Naive thymus-derived CD4-positive, alpha-beta T cell (primary cell): ENCODE measurements at regions of chr2 and their contacts with region 1.

Region 1: GRCh38 chr2:207166039-207166348 is 246 bp upstream of the KLF7 start:
- DNase-seq: peak; percentile 88 to 99 (median 98)
- ATAC-seq: peak; percentile 93
- H3K4me3 ChIP-seq: peak overlapping the region; percentile 89
- H3K4me3 Mint-ChIP-seq: peak overlapping the region; percentile 94 to 100 (median 98)
- H3K27ac ChIP-seq: peak overlapping the region; percentile 100
- H3K27ac Mint-ChIP-seq: peak overlapping the region; percentile 93 to 99 (median 97)
- H3K4me1 ChIP-seq: peaks cover 0 to 17% of the 10 kb centered on the region in 2 donors
- H3K4me1 Mint-ChIP-seq: peaks cover 32 to 48% (median 36%) of the 10 kb centered on the region in 7 donors
- H3K27me3 ChIP-seq: no peaks in the 10 kb centered on the region
- H3K27me3 Mint-ChIP-seq: peaks cover 0 to 2% (median 0%) of the 10 kb centered on the region in 5 donors

Region 2: DNA sequence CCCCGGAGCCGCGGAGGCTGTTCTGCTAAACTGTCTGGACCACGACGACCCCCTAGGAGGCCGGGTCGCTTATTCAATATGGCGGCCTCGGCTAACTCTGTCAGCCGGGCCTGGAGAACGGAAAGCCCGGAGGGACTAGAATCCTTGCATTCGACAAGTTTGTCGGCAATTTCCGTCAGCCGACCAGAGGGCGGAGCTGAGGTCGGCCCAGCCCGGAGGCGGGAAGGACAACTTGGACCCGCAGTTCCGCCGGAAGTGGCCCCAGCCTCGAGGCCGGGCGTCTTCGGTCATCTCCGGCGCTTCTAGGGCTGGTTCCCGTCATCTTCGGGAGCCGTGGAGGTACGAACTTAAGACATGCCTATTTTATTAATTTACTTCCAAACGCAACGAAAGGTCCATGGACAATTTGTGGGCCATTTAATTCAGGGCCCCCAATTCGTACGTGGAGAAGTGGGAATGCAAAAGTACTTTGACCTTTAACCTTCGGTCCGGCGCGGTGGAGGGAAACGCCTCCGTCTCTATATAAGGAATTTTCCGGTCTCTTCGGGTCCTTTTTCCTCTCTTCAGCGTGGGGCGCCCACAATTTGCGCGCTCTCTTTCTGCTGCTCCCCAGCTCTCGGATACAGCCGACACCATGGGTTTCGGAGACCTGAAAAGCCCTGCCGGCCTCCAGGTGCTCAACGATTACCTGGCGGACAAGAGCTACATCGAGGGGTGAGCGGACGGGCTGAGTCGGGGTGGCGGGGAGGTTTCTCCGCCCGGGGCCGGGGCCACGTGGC is 1006.5 kb before region 1 on chr2 and contains the starts of genes EEF1B2 and NDUFS1:
- CTCF ChIA-PET with region 1: no interaction called
- POLR2A ChIA-PET with region 1: interaction called, 3 read pairs
- intact Hi-C with region 1: loop called in 1 of 2 experiments (anchors 2 kb)
- DNase-seq: peak; percentile 88 to 97 (median 96)
- ATAC-seq: peak; percentile 94
- H3K4me3 ChIP-seq: peak within 1 kb of the TSS; percentile 95
- H3K4me3 Mint-ChIP-seq: peak within 1 kb of the TSS; percentile 95 to 100 (median 98)
- H3K27ac ChIP-seq: peak within 1 kb of the TSS; percentile 96
- H3K27ac Mint-ChIP-seq: peak within 1 kb of the TSS; percentile 97 to 99 (median 99)
- H3K4me1 ChIP-seq: peaks cover 19 to 29% of the 10 kb centered on the region in 2 donors
- H3K4me1 Mint-ChIP-seq: peaks cover 36 to 78% (median 62%) of the 10 kb centered on the region in 7 donors
- H3K27me3 ChIP-seq: no peaks in the 10 kb centered on the region
- H3K27me3 Mint-ChIP-seq: no peaks in the 10 kb centered on the region
- total RNA-seq, gene EEF1B2: 542 to 1,236 (median 1,148) TPM
- total RNA-seq, gene NDUFS1: 37.3 to 61.9 (median 56.3) TPM

Region 3: GRCh38 chr2:207046724-207047123 is 119.3 kb before region 1 on chr2:
- CTCF ChIA-PET with region 1: interaction called, 5 read pairs
- POLR2A ChIA-PET with region 1: interaction called, 47 read pairs
- intact Hi-C with region 1: loop called (anchors 1 kb)
- DNase-seq: peak in 8 of 9 donors; percentile 24 to 69 (median 52)
- ATAC-seq: peak; percentile 79
- H3K4me3 ChIP-seq: no peak overlapping the region
- H3K4me3 Mint-ChIP-seq: peak overlapping the region in 8 of 10 donors; percentile 0 to 66 (median 12)
- H3K27ac ChIP-seq: no peak overlapping the region
- H3K27ac Mint-ChIP-seq: peak overlapping the region; percentile 2 to 78 (median 56)
- H3K4me1 ChIP-seq: peaks cover 0 to 4% of the 10 kb centered on the region in 2 donors
- H3K4me1 Mint-ChIP-seq: peaks cover 11 to 14% (median 13%) of the 10 kb centered on the region in 7 donors
- H3K27me3 ChIP-seq: no peaks in the 10 kb centered on the region
- H3K27me3 Mint-ChIP-seq: peaks cover 0 to 16% (median 0%) of the 10 kb centered on the region in 5 donors

Region 4: DNA sequence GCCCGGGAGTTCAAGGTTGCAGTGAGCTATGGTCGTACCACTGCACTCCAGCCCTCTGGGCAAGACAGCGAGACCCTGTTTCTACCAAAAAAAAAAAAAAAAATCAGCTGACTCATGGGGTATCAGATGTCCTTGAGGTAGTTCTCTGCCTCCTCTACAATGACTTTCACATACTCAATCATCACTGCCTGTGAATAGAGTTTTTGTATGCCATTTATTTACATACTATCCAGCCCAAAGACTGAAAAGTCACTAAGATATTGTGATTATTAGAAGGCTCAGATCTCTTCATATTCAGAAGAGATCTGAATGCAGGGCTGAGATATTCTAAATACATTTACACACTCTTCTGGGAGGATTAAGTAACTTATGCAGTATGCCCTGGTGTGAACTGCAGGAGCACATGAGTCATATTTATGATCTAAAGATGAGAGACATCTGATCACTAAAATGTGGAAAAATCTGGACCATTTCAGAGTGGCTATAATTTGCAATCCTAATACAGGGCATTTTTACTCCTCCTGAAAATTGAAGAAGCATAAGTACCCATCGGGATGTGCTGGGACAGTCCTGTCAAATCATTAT is 39.2 kb before region 1 on chr2:
- CTCF ChIA-PET with region 1: interaction called, 4 read pairs
- POLR2A ChIA-PET with region 1: interaction called, 23 read pairs
- intact Hi-C with region 1: loop called (anchors 5 kb)
- DNase-seq: no peak
- ATAC-seq: no peak
- H3K4me3 ChIP-seq: no peak overlapping the region
- H3K4me3 Mint-ChIP-seq: no peak overlapping the region
- H3K27ac ChIP-seq: no peak overlapping the region
- H3K27ac Mint-ChIP-seq: no peak overlapping the region
- H3K4me1 ChIP-seq: peaks cover 0 to 6% of the 10 kb centered on the region in 2 donors
- H3K4me1 Mint-ChIP-seq: peaks cover 34 to 94% (median 72%) of the 10 kb centered on the region in 7 donors
- H3K27me3 ChIP-seq: no peaks in the 10 kb centered on the region
- H3K27me3 Mint-ChIP-seq: no peaks in the 10 kb centered on the region

Region 5: GRCh38 chr2:207238831-207239701 is 73.1 kb after region 1 on chr2:
- CTCF ChIA-PET with region 1: interaction called, 3 read pairs
- POLR2A ChIA-PET with region 1: interaction called, 26 read pairs
- intact Hi-C with region 1: loop called in 1 of 2 experiments (anchors 2 kb)
- DNase-seq: peak in 1 of 9 donors; percentile 54
- ATAC-seq: peak; percentile 69
- H3K4me3 ChIP-seq: no peak overlapping the region
- H3K4me3 Mint-ChIP-seq: peak overlapping the region in 6 of 10 donors; percentile 13 to 63 (median 44)
- H3K27ac ChIP-seq: no peak overlapping the region
- H3K27ac Mint-ChIP-seq: peak overlapping the region in 4 of 9 donors; percentile 13 to 77 (median 42)
- H3K4me1 ChIP-seq: peaks cover 0 to 27% of the 10 kb centered on the region in 2 donors
- H3K4me1 Mint-ChIP-seq: peaks cover 0 to 46% (median 17%) of the 10 kb centered on the region in 7 donors
- H3K27me3 ChIP-seq: no peaks in the 10 kb centered on the region
- H3K27me3 Mint-ChIP-seq: no peaks in the 10 kb centered on the region

Region 6: DNA sequence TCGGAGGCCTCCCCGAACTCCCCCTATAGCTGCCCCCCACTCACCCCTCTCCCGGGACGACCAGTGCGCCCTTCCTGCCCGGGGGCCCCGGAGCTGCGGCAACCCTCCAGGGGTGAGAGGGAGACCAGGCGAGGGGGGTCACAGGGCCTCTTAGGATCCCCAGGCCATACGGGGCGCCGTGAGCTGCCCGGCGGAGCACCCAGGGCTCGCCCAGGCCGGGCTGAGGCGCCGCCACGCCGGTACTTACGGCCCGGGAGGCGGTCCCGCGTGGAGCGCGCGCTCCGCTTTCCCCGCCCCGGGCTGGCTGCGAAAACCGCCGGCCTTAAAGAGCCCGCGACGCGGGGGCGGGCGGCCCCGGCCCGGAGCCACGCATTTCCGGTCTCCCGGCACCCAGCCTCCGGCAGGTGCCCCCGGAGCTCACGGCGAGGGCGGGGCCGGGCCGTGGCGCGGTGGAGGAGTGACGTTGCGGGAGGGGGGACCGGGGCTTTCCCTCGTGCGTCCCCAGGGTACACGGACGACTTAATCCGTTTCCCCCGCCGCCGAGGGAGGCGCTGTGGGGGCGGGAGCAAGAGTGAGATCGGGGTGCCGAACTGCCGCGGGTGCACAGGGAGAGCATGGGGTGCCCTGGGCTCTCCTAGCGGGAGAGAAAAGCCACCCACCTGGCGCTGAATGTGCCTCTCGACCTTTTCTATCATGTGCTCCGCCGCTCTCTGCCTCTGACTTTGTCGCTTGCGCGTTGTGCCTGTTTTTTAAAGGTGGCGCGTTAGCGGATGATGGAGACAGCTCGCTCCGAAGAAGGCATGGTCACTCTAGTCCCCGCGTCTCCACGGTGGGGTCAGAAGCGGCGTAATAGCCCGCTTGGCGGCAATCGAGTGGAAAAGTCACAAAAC is 459.3 kb after region 1 on chr2 and contains the start of gene METTL21A:
- CTCF ChIA-PET with region 1: no interaction called
- POLR2A ChIA-PET with region 1: interaction called, 5 read pairs
- intact Hi-C with region 1: loop called (anchors 1 kb)
- DNase-seq: peak; percentile 91 to 97 (median 95)
- ATAC-seq: peak; percentile 91
- H3K4me3 ChIP-seq: peak within 1 kb of the TSS; percentile 92
- H3K4me3 Mint-ChIP-seq: peak within 1 kb of the TSS; percentile 93 to 96 (median 94)
- H3K27ac ChIP-seq: peak within 1 kb of the TSS; percentile 99
- H3K27ac Mint-ChIP-seq: peak within 1 kb of the TSS; percentile 86 to 96 (median 95)
- H3K4me1 ChIP-seq: peaks cover 4 to 10% of the 10 kb centered on the region in 2 donors
- H3K4me1 Mint-ChIP-seq: peaks cover 32 to 52% (median 40%) of the 10 kb centered on the region in 7 donors
- H3K27me3 ChIP-seq: no peaks in the 10 kb centered on the region
- H3K27me3 Mint-ChIP-seq: peaks cover 0 to 2% (median 0%) of the 10 kb centered on the region in 5 donors
- total RNA-seq, gene METTL21A: 14.6 to 20.5 (median 19.6) TPM